Psoas muscle (tissue), 8 donors: ENCODE measurements at regions of chr11 and their contacts with region 1.

Region 1: GRCh38 chr11:109085708-109086373 is 336.1 kb upstream of the C11orf87 start:
- DNase-seq: peak in 1 of 2 donors; percentile 50
- ATAC-seq: peak in 1 of 4 donors; percentile 12
- H3K4me3 ChIP-seq: no peak overlapping the region
- H3K27ac ChIP-seq: no peak overlapping the region
- H3K4me1 ChIP-seq: no peaks in the 10 kb centered on the region
- H3K27me3 ChIP-seq: no peaks in the 10 kb centered on the region
- CTCF ChIP-seq: no peak

Region 2: GRCh38 chr11:108685419-108686130 is 400.3 kb before region 1 on chr11:
- intact Hi-C with region 1: no loop called
- DNase-seq: no peak
- ATAC-seq: no peak
- H3K4me3 ChIP-seq: no peak overlapping the region
- H3K27ac ChIP-seq: no peak overlapping the region
- H3K4me1 ChIP-seq: no peaks in the 10 kb centered on the region
- H3K27me3 ChIP-seq: no peaks in the 10 kb centered on the region
- CTCF ChIP-seq: no peak

Region 3: DNA sequence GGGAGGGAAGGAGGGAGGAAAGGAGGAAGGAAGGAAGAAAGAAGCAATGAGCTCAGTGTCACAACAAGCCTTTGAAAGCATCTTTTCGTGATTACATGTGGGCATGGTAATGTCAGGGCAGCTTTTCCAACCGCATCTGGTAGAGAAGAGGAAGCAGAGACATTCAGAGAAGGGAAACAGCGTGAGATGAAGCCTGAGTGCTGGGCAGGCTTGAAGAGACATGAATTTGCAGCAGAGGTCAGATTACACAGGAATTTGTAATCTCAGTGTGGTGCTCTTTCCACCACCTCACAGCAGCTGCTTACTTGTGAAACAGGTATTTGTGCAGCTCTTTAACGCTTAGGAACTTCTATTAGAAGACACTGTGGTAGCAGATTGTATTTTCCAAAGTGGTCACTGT is 46.7 kb after region 1 on chr11:
- intact Hi-C with region 1: loop called in 1 of 2 experiments (anchors 10 kb)
- DNase-seq: no peak
- ATAC-seq: no peak
- H3K4me3 ChIP-seq: no peak overlapping the region
- H3K27ac ChIP-seq: no peak overlapping the region
- H3K4me1 ChIP-seq: no peaks in the 10 kb centered on the region
- H3K27me3 ChIP-seq: no peaks in the 10 kb centered on the region
- CTCF ChIP-seq: no peak